ENCODE measurements at regions of chr20 and their contacts with region 1.

Region 1: GRCh38 chr20:54093423-54094267 is 23.3 kb upstream of the BCAS1 start:
- DNase-seq: no peak
- H3K4me3 ChIP-seq: no peak overlapping the region
- H3K27ac ChIP-seq: no peak overlapping the region
- H3K4me1 ChIP-seq: peaks cover 8% of the 10 kb centered on the region; the same call in 1 of the 2 replicates
- H3K27me3 ChIP-seq: no peaks in the 10 kb centered on the region
- CTCF ChIP-seq: no peak

Region 2: DNA sequence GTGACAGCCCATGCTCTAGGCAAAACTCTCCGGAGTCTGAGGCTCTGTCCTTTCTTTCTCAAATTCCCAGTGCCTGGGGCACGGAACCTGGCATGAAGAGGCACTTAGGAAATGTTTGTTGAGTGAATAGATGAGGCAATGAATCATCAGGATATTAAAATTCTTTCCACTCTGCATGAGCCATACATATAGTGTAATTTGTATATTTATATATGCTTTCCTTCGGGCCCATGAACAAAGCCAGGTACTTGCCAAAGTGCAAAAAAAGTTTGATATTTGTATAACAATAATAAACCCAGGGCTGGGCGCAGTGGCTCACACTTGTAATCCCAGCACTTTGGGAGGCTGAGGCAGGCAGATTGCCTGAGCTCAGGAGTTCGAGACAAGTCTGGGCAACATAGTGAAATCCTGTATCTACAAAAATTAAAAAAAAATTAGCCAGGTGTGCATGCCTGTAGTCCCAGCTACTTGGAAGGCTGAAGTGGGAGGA is 287.7 kb before region 1 on chr20:
- CTCF ChIA-PET with region 1: no interaction called
- POLR2A ChIA-PET with region 1: no interaction called
- intact Hi-C with region 1: no loop called
- DNase-seq: peak in 1 of 2 experiments; percentile 95
- H3K4me3 ChIP-seq: no peak overlapping the region
- H3K27ac ChIP-seq: peak overlapping the region; percentile 92
- H3K4me1 ChIP-seq: peaks cover 35% of the 10 kb centered on the region
- H3K27me3 ChIP-seq: no peaks in the 10 kb centered on the region
- CTCF ChIP-seq: no peak

Region 3: DNA sequence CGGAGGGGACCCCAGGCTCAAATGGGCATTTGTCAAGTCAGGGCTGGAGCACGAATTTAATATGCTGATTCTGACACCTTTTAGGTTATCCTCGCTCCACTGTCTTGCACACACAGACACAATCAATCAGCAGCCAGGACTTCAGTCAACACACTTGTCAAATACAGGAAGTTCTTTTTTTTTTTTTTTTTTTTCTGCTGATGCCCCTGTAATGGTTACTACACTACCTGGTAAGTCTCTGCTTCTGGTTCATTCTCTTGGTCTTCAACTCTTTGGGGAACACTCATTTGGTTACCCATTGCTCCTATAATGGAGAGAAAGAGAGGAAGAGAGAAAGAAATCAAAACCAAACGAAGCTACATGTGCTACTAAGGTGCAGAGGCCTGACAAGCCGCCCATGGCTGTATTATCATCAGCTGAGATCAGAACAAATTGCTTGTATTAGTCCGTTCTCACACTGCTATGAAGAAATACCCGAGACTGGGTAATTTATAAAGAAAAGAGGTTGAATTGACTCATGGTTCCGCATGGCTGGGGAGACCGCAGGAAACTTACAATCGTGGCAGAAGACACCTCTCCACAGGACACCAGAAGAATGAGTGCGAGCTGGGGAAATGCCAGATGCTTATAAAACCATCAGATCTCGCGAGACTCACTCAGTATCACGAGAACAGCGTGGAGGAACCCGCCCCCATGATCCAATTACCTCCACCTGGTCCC is 35.1 kb before region 1 on chr20:
- CTCF ChIA-PET with region 1: no interaction called
- POLR2A ChIA-PET with region 1: no interaction called
- intact Hi-C with region 1: no loop called
- DNase-seq: no peak
- H3K4me3 ChIP-seq: no peak overlapping the region
- H3K27ac ChIP-seq: no peak overlapping the region
- H3K4me1 ChIP-seq: no peaks in the 10 kb centered on the region
- H3K27me3 ChIP-seq: no peaks in the 10 kb centered on the region
- CTCF ChIP-seq: no peak

Region 4: DNA sequence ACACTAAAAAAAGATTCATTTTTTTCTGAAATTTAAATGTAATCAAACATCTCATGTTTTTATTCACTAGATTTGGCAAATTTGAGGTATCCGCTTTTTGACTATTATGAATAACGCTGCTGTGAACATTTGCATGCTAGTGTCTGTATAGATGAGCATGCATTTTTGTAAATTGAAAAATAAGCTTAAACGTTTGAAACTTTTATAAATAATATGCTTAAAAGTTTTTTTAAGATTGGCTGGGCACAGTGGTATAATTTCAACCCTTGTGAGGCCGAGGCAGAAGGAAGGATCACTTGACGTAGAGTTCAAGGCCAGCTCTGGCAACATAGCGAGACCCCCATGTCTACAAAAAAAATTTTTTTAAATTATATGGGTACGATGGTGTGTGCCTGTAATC is 232.4 kb after region 1 on chr20:
- CTCF ChIA-PET with region 1: no interaction called
- POLR2A ChIA-PET with region 1: interaction called, 25 read pairs
- intact Hi-C with region 1: no loop called
- DNase-seq: no peak
- H3K4me3 ChIP-seq: no peak overlapping the region
- H3K27ac ChIP-seq: no peak overlapping the region
- H3K4me1 ChIP-seq: no peaks in the 10 kb centered on the region
- H3K27me3 ChIP-seq: no peaks in the 10 kb centered on the region
- CTCF ChIP-seq: no peak

Region 5: GRCh38 chr20:54649511-54649962 is 555.9 kb after region 1 on chr20:
- CTCF ChIA-PET with region 1: interaction called, 10 read pairs
- POLR2A ChIA-PET with region 1: no interaction called
- intact Hi-C with region 1: loop called (anchors 1 kb)
- DNase-seq: peak; percentile 52 to 64
- H3K4me3 ChIP-seq: no peak overlapping the region
- H3K27ac ChIP-seq: no peak overlapping the region
- H3K4me1 ChIP-seq: no peaks in the 10 kb centered on the region
- H3K27me3 ChIP-seq: peaks cover 40% of the 10 kb centered on the region
- CTCF ChIP-seq: peak; percentile 90